Gastrocnemius medialis (tissue), 4 donors: ENCODE measurements at regions of chr5 and their contacts with region 1.

Region 1: GRCh38 chr5:117454716-117455596 is 880.3 kb upstream of the SEMA6A start:
- DNase-seq: no peak
- ATAC-seq: no peak
- H3K4me3 ChIP-seq: no peak overlapping the region
- H3K27ac ChIP-seq: no peak overlapping the region
- H3K4me1 ChIP-seq: no peaks in the 10 kb centered on the region
- H3K27me3 ChIP-seq: no peaks in the 10 kb centered on the region
- CTCF ChIP-seq: peak in 4 of 5 experiments; percentile 11 to 62 (median 44)
- POLR2A ChIP-seq: no peak

Region 2: GRCh38 chr5:117657541-117657940 is 202.6 kb after region 1 on chr5:
- in situ Hi-C with region 1: no loop called
- intact Hi-C with region 1: no loop called
- DNase-seq: no peak
- ATAC-seq: no peak
- H3K4me3 ChIP-seq: no peak overlapping the region
- H3K27ac ChIP-seq: no peak overlapping the region
- H3K4me1 ChIP-seq: no peaks in the 10 kb centered on the region
- H3K27me3 ChIP-seq: no peaks in the 10 kb centered on the region
- CTCF ChIP-seq: no peak
- POLR2A ChIP-seq: no peak

Region 3: GRCh38 chr5:118791926-118792734 is 1337.2 kb after region 1 on chr5:
- in situ Hi-C with region 1: loop called in 2 of 4 experiments (anchors 25 kb)
- intact Hi-C with region 1: loop called (anchors 2 kb)
- DNase-seq: peak in 1 of 2 donors; percentile 23
- ATAC-seq: peak; percentile 84 to 93
- H3K4me3 ChIP-seq: peak overlapping the region in 1 of 4 donors; percentile 19
- H3K27ac ChIP-seq: peak overlapping the region in 1 of 4 donors; percentile 35
- H3K4me1 ChIP-seq: peaks cover 5 to 6% of the 10 kb centered on the region in 2 donors
- H3K27me3 ChIP-seq: no peaks in the 10 kb centered on the region
- CTCF ChIP-seq: peak in 4 of 5 experiments; percentile 42 to 70 (median 58)
- POLR2A ChIP-seq: no peak